ENCODE measurements at regions of chr12 and their contacts with region 1.

Region 1: GRCh38 chr12:24596768-24597388 is 352.0 kb downstream of the BCAT1 start:
- DNase-seq: peak; percentile 13 to 39 (median 20)
- ATAC-seq: peak; percentile 57; the same call in 1 of the 3 replicates
- H3K4me3 ChIP-seq: no peak overlapping the region
- H3K27ac ChIP-seq: no peak overlapping the region
- H3K4me1 ChIP-seq: no peaks in the 10 kb centered on the region
- H3K27me3 ChIP-seq: no peaks in the 10 kb centered on the region
- CTCF ChIP-seq: peak; percentile 37 to 59 (median 46); a peak in 5 of 6 replicates
- EP300 ChIP-seq: no peak
- POLR2A ChIP-seq: no peak
- RAD21 ChIP-seq: peak; percentile 44 to 64

Region 2: DNA sequence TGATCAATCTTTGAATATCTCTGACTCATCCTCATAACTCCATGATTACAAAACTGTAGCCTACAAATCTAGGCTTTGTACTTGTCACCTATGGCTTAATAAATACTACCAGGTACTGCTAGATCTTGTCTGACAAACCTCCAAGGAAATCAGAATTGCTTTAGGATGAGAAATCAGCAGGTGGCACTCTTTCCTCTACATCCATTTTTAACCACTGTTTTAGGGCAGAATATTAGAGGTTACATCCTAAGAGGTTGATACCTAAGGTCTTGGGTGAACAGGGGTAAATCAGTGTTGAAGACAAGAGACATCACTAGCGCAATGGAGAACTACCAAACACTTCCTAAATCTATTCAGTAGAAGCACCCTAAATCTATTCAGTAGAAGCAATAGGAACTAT is 584.4 kb before region 1 on chr12:
- CTCF ChIA-PET with region 1: no interaction called
- POLR2A ChIA-PET with region 1: no interaction called
- in situ Hi-C with region 1: no loop called
- intact Hi-C with region 1: loop called (anchors 5 kb)
- DNase-seq: no peak
- ATAC-seq: no peak
- H3K4me3 ChIP-seq: no peak overlapping the region
- H3K27ac ChIP-seq: no peak overlapping the region
- H3K4me1 ChIP-seq: no peaks in the 10 kb centered on the region
- H3K27me3 ChIP-seq: no peaks in the 10 kb centered on the region
- CTCF ChIP-seq: peak in 1 of 3 experiments; percentile 17; a peak in 1 of 6 replicates
- EP300 ChIP-seq: no peak
- POLR2A ChIP-seq: no peak
- RAD21 ChIP-seq: peak in 1 of 2 experiments; percentile 42; a peak in 1 of 4 replicates

Region 3: GRCh38 chr12:24534622-24535021 is 62.3 kb before region 1 on chr12:
- CTCF ChIA-PET with region 1: no interaction called
- POLR2A ChIA-PET with region 1: no interaction called
- in situ Hi-C with region 1: no loop called
- intact Hi-C with region 1: no loop called
- DNase-seq: no peak
- ATAC-seq: no peak
- H3K4me3 ChIP-seq: no peak overlapping the region
- H3K27ac ChIP-seq: no peak overlapping the region
- H3K4me1 ChIP-seq: no peaks in the 10 kb centered on the region
- H3K27me3 ChIP-seq: peaks cover 2 to 4% of the 10 kb centered on the region in 2 experiments; a peak in 2 of 5 replicates
- CTCF ChIP-seq: no peak
- EP300 ChIP-seq: no peak
- POLR2A ChIP-seq: no peak
- RAD21 ChIP-seq: no peak

Region 4: DNA sequence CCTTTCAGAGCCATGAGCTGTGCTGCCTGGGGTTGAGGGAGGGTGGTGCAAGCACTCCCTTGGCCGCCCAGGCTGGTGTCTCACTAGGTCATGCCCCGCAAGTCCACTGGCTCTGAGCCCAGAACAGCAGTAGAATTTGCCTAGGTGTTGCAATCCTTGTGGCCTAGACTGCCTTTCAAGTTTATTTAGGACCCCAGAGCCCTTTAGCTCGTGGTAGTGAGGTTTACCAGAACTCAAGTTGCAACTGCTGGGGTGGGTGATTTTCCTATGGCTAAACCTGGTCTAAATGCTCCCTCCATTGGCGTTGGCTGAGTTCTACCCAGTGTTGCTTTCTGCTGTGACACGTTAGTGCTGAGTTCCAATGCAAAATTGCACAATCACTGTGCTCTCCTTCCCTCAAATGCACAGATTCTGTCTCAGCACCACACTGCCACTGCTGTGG is 64.8 kb after region 1 on chr12:
- CTCF ChIA-PET with region 1: no interaction called
- POLR2A ChIA-PET with region 1: no interaction called
- in situ Hi-C with region 1: no loop called
- intact Hi-C with region 1: no loop called
- DNase-seq: peak in 1 of 4 experiments; percentile 3
- ATAC-seq: no peak
- H3K4me3 ChIP-seq: no peak overlapping the region
- H3K27ac ChIP-seq: no peak overlapping the region
- H3K4me1 ChIP-seq: no peaks in the 10 kb centered on the region
- H3K27me3 ChIP-seq: no peaks in the 10 kb centered on the region
- CTCF ChIP-seq: no peak
- EP300 ChIP-seq: no peak
- POLR2A ChIP-seq: no peak
- RAD21 ChIP-seq: no peak

Region 5: GRCh38 chr12:24728366-24728765 is 131.5 kb after region 1 on chr12:
- CTCF ChIA-PET with region 1: no interaction called
- POLR2A ChIA-PET with region 1: no interaction called
- in situ Hi-C with region 1: no loop called
- intact Hi-C with region 1: loop called (anchors 5 kb)
- DNase-seq: peak in 1 of 4 experiments; percentile 35
- ATAC-seq: 0 out of 3 replicates have a peak, but pooled peaks have one; percentile 55
- H3K4me3 ChIP-seq: no peak overlapping the region
- H3K27ac ChIP-seq: no peak overlapping the region
- H3K4me1 ChIP-seq: no peaks in the 10 kb centered on the region
- H3K27me3 ChIP-seq: no peaks in the 10 kb centered on the region
- CTCF ChIP-seq: peak in 1 of 3 experiments; percentile 65; a peak in 3 of 6 replicates
- EP300 ChIP-seq: no peak
- POLR2A ChIP-seq: no peak
- RAD21 ChIP-seq: peak; percentile 33 to 77; a peak in 3 of 4 replicates

Measured in K562 (cell line).